Stomach (tissue), 19 donors: ENCODE measurements at regions of chr15 and their contacts with region 1.

Region 1: GRCh38 chr15:32067115-32067514 is 36.8 kb downstream of the CHRNA7 start:
- DNase-seq: no peak
- H3K4me3 ChIP-seq: no peak overlapping the region
- H3K27ac ChIP-seq: no peak overlapping the region
- H3K4me1 ChIP-seq: no peaks in the 10 kb centered on the region
- H3K27me3 ChIP-seq: no peaks in the 10 kb centered on the region
- CTCF ChIP-seq: no peak
- EP300 ChIP-seq: no peak
- POLR2A ChIP-seq: no peak

Region 2: GRCh38 chr15:32091505-32092380 is 24.6 kb after region 1 on chr15:
- intact Hi-C with region 1: loop called (anchors 2 kb)
- DNase-seq: peak in 1 of 2 donors; percentile 11
- H3K4me3 ChIP-seq: no peak overlapping the region
- H3K27ac ChIP-seq: no peak overlapping the region
- H3K4me1 ChIP-seq: no peaks in the 10 kb centered on the region
- H3K27me3 ChIP-seq: no peaks in the 10 kb centered on the region
- CTCF ChIP-seq: no peak
- EP300 ChIP-seq: no peak
- POLR2A ChIP-seq: no peak